ENCODE measurements at regions of chr19 and their contacts with region 1.

Region 1: DNA sequence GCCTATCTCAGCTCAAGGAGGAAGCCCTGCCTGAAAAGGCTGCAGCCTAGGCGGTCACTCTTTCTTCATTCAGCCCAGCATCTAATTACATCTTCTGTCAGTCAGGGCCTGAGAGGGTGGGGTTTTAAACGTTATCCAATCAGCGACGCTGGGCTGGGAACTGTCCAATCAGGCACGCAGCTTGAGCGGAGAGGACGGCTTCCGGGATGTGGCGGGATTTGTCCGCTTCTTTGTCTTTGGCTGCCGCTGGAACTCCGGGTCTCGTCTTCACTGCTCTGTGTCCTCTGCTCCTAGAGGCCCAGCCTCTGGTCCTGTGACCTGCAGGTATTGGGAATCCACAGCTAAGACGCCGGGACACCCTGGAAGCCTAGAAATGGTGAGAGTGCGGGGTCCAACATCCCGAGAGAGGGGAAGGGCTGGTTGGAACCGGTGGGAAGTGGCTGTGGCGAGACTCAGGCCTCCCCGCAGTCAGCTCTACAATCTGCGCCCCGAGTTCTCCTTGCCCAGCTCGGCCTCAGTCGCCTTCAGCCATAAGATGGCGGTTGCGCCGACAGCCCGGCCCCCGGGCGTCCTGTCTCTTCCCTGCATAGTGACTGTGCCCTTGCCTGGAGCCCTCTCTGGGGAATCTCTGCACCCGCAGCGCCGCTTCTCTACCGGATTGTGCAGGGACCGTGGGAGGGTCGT is at the start of gene ZNF738:
- DNase-seq: peak; percentile 91 to 94
- ATAC-seq: peak; percentile 98 to 100 (median 99)
- H3K4me3 ChIP-seq: peak within 1 kb of the TSS; percentile 85
- H3K27ac ChIP-seq: peak within 1 kb of the TSS; percentile 46
- H3K4me1 ChIP-seq: no peaks in the 10 kb centered on the region
- H3K27me3 ChIP-seq: peaks cover 0 to 3% (median 0%) of the 10 kb centered on the region in 3 donors
- CTCF ChIP-seq: no peak
- total RNA-seq, gene ZNF738: 0.56 to 1.1 (median 0.69) TPM

Region 2: DNA sequence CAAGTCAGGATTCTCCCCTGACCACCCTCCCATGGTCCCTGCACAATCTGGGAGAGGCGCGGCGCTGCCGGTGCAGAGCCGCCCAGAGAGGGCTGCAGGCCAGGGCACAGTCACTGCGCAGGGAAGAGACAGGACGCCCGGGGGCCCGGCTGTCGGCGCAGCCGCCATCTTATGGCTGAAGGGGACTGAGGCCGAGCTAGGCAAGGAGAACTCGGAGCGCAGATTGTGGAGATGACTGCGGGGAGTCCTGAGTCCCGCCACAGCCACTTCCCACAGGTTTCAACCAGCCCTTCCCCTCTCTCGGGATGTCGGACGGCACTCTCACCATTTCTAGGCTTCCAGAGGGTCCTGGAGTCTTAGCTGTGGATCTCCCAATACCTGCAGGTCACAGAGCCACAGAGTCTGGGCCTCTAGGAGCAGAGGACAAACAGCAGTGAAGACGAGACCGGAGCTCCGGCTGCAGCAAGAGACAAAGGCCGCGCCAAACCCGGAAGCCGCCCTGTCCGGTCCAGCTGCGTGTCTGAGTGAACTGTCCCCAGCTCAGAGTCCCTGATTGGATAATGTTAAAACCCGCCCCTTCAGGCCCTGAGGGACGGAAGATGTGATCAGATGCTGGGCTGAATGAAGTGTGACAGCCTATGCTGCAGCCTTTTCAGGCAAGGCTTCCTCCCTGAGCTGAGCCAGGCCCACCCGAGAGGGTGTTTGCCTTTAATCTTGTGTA is 29.9 kb before region 1 on chr19 and contains the start of gene ZNF708:
- intact Hi-C with region 1: loop called in 1 of 2 experiments (anchors 1 kb)
- DNase-seq: peak; percentile 87 to 90
- ATAC-seq: peak; percentile 99 to 100 (median 100)
- H3K4me3 ChIP-seq: peak within 1 kb of the TSS; percentile 89
- H3K27ac ChIP-seq: peak within 1 kb of the TSS; percentile 93
- H3K4me1 ChIP-seq: peaks cover 16% of the 10 kb centered on the region
- H3K27me3 ChIP-seq: no peaks in the 10 kb centered on the region
- CTCF ChIP-seq: no peak
- total RNA-seq, gene ZNF708: 3.2 to 4.9 (median 4.3) TPM

Measured in psoas muscle (tissue), 8 donors.